ENCODE measurements at regions of chr12 and their contacts with region 1.

Region 1: GRCh38 chr12:56468216-56469006 is at the start of gene SPRYD4:
- DNase-seq: peak; percentile 36
- H3K4me3 ChIP-seq: peak within 1 kb of the TSS; percentile 84
- CTCF ChIP-seq: peak; percentile 50

Region 2: DNA sequence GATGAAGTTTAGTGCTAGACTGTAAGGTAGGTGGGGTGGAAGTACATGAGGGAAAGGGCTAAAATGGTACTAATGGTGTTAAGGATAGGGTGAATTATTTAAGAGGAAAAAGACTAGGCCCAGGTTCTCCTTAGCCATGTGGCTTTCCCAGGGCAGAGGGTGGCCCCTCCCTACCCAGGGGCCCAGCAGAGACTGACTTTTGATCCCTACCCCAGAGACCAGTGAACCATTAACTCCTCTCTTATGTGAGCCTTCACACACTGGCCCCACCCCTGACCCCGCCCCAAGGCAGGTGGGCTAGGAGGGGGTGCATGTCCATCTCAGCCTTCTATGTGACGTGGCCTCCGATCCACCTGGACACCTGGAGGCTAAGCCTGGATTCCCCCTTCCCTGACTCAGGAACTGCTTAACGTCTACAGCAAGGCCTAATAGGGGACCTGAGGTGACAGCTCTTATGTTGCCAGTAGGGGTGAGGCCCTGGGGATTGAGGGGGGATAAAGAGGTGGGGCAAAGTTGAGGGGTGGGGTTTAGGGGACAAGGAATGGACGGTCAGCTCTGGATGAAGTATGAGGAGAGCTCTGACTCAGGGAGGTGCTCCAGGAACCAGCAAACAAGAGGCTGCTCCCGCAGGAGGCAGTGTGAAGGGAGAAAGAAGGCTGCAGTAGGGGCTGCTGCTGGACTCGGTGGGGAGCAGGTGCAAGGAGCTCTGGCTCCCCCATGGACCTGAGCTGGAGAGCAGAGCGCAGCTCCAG is 237.8 kb before region 1 on chr12:
- CTCF ChIA-PET with region 1: interaction called, 10 read pairs
- POLR2A ChIA-PET with region 1: no interaction called
- DNase-seq: no peak
- H3K4me3 ChIP-seq: no peak overlapping the region
- CTCF ChIP-seq: no peak

Region 3: DNA sequence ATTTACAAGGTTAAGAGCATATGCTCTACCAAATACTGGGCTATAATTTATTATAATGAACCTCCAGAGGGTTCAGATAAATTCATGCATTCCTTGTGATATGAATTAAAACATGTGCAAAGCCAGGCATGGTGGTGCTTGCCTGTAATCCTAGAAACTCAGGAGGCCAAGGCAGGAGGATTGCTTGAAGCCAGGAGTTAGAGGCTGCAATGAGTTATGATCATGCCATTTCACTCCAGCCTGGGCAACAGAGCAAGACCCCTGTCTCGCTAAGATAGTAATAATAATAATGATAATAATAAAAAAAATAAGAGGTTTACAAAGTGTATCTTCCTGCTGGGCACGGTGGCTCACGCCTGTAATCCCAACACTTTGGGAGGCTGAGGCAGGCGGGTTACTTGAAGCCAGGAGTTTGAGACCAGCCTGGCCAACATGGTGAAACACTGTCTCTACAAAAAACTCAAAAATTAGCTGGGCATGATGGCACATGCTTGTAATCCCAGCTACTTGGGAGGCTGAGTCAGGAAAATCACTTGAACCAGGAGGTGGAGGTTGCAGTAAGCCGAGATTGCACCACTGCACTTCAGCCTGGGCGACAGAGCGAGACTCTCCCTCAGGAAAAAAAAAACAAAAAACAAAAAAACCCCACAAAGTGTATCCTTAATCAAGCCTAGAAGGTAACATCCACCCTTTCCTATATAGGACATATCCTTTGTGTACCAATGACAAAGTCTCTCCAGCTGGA is 161.0 kb before region 1 on chr12:
- CTCF ChIA-PET with region 1: interaction called, 10 read pairs
- POLR2A ChIA-PET with region 1: no interaction called
- DNase-seq: no peak
- H3K4me3 ChIP-seq: no peak overlapping the region
- CTCF ChIP-seq: no peak

Region 4: GRCh38 chr12:56645717-56646446 is 177.5 kb after region 1 on chr12 and contains the start of gene ATP5F1B:
- CTCF ChIA-PET with region 1: no interaction called
- POLR2A ChIA-PET with region 1: no interaction called
- DNase-seq: peak; percentile 100
- H3K4me3 ChIP-seq: peak within 1 kb of the TSS; percentile 99
- CTCF ChIP-seq: no peak

Region 5: DNA sequence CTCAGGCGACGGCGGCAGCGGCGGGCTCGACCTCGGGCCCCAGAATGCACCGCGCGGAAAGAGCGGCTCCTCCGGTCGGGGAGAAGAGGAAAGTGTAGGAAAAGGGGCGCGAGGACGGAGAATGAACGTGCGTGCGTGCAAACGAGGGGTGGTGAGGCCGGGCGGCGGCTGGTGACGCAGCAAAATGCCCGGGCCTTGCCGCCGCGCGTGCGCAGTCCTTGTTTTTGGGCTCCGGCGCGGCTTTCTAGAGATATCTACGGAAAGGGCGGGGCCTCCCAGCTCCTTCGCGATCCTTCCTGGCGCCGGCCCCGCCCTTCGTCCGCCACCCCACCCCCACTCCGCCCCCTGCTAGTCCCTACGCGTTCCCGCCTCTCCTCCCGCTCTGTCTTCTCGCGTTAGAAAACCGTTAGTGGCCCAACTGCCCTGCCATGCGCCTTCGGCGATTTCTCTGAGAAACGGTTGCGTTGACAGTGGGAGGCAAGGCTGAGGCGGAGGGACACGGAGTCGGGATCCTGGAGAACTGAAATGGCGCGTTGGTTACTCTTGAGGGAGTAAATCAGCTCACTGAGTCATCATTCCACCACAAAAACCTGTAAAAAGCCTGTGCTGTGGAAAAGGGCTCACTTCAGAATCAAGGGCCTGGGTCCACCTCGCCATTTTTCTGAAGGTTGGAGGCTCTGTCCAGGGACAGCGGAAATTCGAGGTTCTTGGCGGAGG is 219.9 kb after region 1 on chr12 and contains the start of gene PTGES3:
- CTCF ChIA-PET with region 1: no interaction called
- POLR2A ChIA-PET with region 1: no interaction called
- DNase-seq: peak; percentile 77
- H3K4me3 ChIP-seq: peak within 1 kb of the TSS; percentile 95
- CTCF ChIP-seq: no peak